RWPE1 (cell line): ENCODE measurements at regions of chr6 and their contacts with region 1.

Region 1: DNA sequence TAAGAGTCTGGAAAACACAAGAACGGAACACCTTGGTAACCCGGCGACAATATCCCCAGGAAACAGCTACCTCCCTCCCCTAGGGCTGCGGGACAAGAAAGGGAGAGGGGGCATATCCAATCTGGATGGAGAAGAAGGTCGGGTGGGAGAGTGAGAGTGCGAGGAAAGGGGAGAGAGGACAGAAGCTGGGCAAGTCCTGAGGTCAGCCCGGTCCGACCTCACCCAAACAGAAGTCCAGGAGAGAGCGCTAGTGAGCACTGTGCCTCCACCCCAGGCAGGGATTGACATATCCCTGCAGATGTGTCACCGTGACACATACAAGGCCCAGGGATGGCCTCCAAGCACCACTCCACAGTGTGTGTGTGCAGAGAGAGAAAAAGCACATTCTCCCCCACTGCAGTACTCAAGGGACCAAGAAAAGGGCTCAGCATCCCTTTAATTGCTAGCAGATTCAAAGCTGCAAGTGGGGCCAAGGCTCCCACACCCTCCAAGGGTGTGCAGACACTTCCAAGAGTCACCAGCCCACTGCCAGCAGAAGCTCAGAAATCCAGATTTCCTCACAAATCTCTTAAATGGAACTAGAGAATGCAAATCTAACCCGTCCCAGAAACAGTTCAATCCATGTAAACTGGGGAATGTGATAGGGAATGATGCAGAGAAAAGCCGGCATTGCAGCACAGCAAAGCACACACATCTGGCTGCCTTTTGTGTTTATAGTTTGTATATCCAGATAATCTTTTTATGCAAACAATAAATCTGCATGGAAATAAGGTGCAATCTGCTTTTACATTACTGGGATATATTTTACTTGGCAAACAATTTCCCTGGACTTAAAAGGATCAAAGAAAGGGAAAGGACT is 3.1 kb downstream of the PXDC1 start:
- DNase-seq: peak; percentile 67
- H3K27ac ChIP-seq: peak overlapping the region; percentile 99
- CTCF ChIP-seq: peak; percentile 50

Region 2: GRCh38 chr6:3887150-3887700 is 138.8 kb after region 1 on chr6:
- CTCF ChIA-PET with region 1: interaction called, 11 read pairs
- POLR2A ChIA-PET with region 1: no interaction called
- DNase-seq: no peak
- H3K27ac ChIP-seq: no peak overlapping the region
- CTCF ChIP-seq: no peak; the same call in 1 of the 2 replicates

Region 3: GRCh38 chr6:4593951-4594350 is 845.5 kb after region 1 on chr6:
- CTCF ChIA-PET with region 1: no interaction called
- POLR2A ChIA-PET with region 1: no interaction called
- DNase-seq: no peak
- H3K27ac ChIP-seq: no peak overlapping the region
- CTCF ChIP-seq: no peak